ENCODE measurements at regions of chrX and their contacts with region 1.

Region 1: DNA sequence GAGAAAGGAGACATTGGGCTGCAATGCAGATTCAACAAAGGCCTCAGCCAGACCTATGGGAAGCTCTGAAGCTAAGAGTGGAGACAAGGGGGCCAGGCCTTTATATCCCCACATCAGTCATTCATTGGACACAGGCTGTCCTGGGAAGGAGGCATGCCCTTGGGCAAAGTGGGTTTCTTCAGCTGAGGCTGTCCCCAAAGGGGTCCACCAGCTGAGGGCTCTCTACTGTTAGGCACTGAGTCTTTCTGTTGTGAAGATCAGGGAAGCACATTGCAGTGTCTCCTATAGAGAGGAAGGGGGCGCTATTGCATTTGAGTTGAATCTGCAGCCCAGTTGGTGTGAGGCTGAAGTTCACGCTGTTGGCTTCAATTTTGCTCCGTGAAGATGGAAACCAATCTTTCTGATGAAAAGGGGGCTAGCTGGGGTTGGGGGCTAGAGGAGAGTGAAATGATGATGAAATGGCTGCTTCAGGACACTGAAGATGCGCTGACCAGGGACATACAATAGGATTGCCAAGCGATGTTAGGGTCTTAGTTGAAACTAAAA is 48.0 kb downstream of the SLC25A5 start:
- DNase-seq: peak; percentile 69
- H3K4me3 Mint-ChIP-seq: no peak overlapping the region
- H3K27ac Mint-ChIP-seq: no peak overlapping the region
- H3K4me1 Mint-ChIP-seq: no peaks in the 10 kb centered on the region
- H3K27me3 Mint-ChIP-seq: peaks cover 13% of the 10 kb centered on the region
- CTCF ChIP-seq: peak; percentile 65

Region 2: DNA sequence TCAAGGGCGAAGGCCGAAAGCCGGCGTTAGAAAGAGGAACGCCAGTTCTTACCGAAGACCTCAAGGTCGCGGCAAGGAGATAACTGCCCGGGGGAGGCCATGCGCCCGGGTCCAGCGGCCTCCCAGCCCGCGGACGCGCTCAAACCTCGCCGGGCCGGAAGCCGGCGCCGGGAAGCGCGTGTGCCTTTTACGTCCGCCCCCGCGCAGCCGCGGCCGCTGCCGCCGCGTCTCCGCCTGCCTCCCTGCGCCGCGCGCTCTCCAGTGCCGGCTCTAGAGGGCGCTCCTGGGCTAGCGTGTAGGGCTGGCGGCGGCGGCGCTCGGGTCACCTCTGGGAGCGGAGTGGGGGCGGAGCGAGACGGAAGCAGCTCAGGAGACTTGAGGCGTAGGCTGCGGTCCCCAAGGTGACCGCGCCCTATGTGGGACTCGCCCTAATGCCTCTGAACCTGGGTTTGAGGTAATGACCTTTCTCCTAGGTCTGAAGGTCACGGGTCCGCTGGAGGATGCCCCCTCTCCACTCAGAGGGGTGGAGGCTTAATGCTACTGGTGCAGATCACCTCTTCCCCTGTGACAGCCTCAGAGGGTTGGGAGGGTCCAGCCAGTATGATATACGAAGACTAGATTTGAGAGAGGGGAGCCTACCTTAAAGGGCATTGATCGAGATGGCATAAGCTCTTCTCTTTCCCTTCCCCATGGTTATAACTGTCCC is 47.1 kb before region 1 on chrX:
- CTCF ChIA-PET with region 1: interaction called, 18 read pairs
- POLR2A ChIA-PET with region 1: interaction called, 17 read pairs
- intact Hi-C with region 1: no loop called
- DNase-seq: peak; percentile 75
- H3K4me3 Mint-ChIP-seq: peak overlapping the region; percentile 81
- H3K27ac Mint-ChIP-seq: peak overlapping the region; percentile 87
- H3K4me1 Mint-ChIP-seq: no peaks in the 10 kb centered on the region
- H3K27me3 Mint-ChIP-seq: no peaks in the 10 kb centered on the region
- CTCF ChIP-seq: peak; percentile 54

Region 3: GRCh38 chrX:119488749-119489148 is 27.5 kb before region 1 on chrX:
- CTCF ChIA-PET with region 1: interaction called, 485 read pairs
- POLR2A ChIA-PET with region 1: interaction called, 17 read pairs
- intact Hi-C with region 1: loop called (anchors 1 kb)
- DNase-seq: peak; percentile 72
- H3K4me3 Mint-ChIP-seq: no peak overlapping the region
- H3K27ac Mint-ChIP-seq: no peak overlapping the region
- H3K4me1 Mint-ChIP-seq: no peaks in the 10 kb centered on the region
- H3K27me3 Mint-ChIP-seq: no peaks in the 10 kb centered on the region
- CTCF ChIP-seq: peak; percentile 53

Region 4: DNA sequence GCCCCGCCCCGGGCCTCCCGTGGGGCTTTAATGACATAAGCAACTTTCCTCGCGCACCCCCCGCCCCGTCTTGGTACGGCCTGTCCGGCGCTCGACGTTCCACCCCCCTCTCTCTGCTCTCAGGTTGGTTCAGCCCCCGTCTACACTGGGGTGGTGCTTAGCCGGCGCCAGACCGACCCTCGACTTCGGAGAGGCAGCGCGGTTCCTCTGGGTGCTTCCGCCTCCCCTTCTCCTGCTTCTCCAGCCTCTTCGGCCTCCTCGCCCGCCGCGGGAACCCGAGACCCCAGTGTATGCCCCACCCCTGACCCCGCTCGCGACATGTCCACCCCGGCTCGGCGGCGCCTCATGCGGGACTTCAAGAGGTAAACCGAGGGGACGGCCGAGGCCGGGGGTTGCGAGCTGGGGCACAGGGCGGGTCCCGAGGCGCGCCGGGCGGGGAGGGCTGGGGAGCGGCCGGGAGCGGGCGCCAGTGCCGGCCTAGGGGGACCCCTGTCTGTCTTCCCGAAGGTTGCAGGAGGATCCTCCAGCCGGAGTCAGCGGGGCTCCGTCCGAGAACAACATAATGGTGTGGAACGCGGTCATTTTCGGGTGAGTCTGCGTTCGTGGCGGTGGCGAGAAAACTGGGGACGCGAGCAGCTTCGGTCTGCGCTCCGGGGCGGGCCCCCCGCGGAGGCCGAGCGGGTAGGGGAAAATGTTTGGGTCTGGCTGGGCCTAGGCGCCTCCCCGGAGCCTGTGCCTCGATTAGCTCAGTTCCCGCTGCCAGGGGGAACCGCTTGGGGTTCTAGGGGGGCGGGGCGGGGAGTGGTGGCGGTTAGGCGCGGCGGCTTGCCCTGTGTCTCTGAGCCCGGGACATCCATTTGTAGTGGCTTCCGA is 58.4 kb after region 1 on chrX and contains the start of gene UBE2A:
- CTCF ChIA-PET with region 1: interaction called, 7 read pairs
- POLR2A ChIA-PET with region 1: interaction called, 5 read pairs
- intact Hi-C with region 1: loop called (anchors 1 kb)
- DNase-seq: peak; percentile 83
- H3K4me3 Mint-ChIP-seq: peak within 1 kb of the TSS; percentile 76
- H3K27ac Mint-ChIP-seq: peak within 1 kb of the TSS; percentile 93
- H3K4me1 Mint-ChIP-seq: peaks cover 6% of the 10 kb centered on the region
- H3K27me3 Mint-ChIP-seq: no peaks in the 10 kb centered on the region
- CTCF ChIP-seq: peak; percentile 38
- total RNA-seq, gene UBE2A: 52.2 and 66.9 TPM in 2 replicates

Region 5: GRCh38 chrX:119655125-119655524 is 138.9 kb after region 1 on chrX:
- CTCF ChIA-PET with region 1: no interaction called
- POLR2A ChIA-PET with region 1: no interaction called
- intact Hi-C with region 1: no loop called
- DNase-seq: peak; percentile 46
- H3K4me3 Mint-ChIP-seq: no peak overlapping the region
- H3K27ac Mint-ChIP-seq: no peak overlapping the region
- H3K4me1 Mint-ChIP-seq: no peaks in the 10 kb centered on the region
- H3K27me3 Mint-ChIP-seq: peaks cover 14% of the 10 kb centered on the region
- CTCF ChIP-seq: no peak

Region 6: DNA sequence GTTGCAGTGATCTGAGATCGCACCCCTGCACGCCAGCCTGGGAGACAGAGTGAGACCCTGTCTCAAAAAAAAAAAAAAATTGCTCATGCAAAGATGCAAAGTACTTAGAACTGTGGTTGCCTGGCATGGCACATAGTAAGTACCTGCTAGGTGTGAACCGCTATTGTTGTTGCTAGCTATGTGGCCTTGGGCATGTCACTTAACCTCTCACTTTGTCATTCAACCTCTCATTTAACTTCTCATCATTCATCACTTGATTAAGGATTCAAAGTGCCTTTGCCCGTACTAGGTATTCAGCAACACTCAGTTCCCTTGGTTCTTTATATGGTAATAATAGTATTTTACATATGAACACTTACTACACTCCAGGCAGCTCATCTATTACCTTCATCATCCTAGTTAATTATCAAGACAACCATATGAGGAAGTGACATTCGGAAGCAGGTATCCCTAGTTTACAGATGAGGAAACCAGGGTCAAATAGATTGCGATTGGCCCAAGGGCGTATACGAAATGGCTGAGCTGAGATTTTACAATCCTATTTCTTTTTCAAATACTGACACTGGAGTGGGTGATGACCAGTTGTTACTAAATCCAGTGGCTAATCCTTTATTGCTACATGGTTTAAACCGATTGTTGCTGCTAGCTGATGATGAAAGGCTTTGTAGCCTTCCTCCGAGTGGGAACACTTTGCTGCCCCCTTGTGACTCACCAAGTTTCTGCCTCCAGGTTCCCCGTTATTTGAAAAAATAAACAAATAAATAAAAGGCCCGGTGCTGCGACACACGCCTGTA is 213.4 kb after region 1 on chrX:
- CTCF ChIA-PET with region 1: interaction called, 6 read pairs
- POLR2A ChIA-PET with region 1: no interaction called
- intact Hi-C with region 1: loop called (anchors 1 kb)
- DNase-seq: peak; percentile 73
- H3K4me3 Mint-ChIP-seq: no peak overlapping the region
- H3K27ac Mint-ChIP-seq: no peak overlapping the region
- H3K4me1 Mint-ChIP-seq: no peaks in the 10 kb centered on the region
- H3K27me3 Mint-ChIP-seq: peaks cover 18% of the 10 kb centered on the region
- CTCF ChIP-seq: peak; percentile 58

Region 7: DNA sequence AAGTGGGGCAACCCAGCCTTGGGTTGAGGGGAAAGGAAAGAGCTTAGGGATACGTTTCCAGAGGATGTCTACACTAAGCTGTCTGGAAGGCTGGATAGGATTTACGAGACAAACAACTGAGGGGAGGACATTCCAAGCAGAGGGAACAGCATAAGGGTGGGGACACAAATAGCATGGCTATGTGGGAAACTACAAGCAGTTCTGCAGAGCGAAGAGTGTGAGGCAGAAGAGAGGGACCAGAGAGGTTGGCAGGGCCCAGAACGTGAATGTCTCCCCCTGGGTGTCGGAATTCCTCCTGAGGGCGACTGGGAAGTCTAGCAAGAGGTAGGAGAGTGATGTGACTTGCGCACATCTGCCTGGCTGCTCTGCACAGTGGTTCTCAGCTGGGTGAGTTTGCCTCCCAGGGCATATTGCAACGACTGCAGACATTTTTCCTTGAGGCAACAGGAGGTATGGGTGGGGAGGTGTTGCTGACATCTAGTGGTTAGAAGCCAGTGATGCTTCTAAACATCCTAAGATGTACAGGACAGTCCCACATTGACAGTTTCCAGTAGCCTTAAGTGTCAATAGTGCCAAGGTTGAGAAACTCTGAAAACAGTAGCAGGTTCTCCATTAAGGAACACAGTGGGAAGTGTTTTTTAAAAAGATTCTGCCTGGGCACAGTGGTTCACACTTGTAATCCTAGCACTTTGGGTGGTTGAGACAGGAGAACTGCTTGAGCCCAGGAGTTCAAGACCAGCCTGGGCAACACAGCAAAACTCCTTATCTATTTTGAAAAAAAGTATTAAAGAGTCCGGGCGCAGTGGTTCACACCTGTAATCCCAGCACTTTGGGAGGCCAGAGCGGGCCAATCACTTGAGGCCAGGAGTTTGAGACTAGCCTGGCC is 364.6 kb after region 1 on chrX:
- CTCF ChIA-PET with region 1: interaction called, 5 read pairs
- POLR2A ChIA-PET with region 1: no interaction called
- intact Hi-C with region 1: loop called (anchors 1 kb)
- DNase-seq: peak; percentile 64
- H3K4me3 Mint-ChIP-seq: no peak overlapping the region
- H3K27ac Mint-ChIP-seq: peak overlapping the region; percentile 44
- H3K4me1 Mint-ChIP-seq: no peaks in the 10 kb centered on the region
- H3K27me3 Mint-ChIP-seq: no peaks in the 10 kb centered on the region
- CTCF ChIP-seq: peak; percentile 73